Activated CD4-positive, alpha-beta memory T cell treated with anti-CD3 and anti-CD28 coated beads, Interleukin-2, amount 10 ng/mL, durations not matched to agents 7 days and 5 days (primary cell): ENCODE measurements at regions of chr14 and their contacts with region 1.

Region 1: GRCh38 chr14:34875031-34875922 is at the start of gene BAZ1A:
- DNase-seq: peak; percentile 44
- H3K4me3 Mint-ChIP-seq: peak within 1 kb of the TSS; percentile 96
- H3K27ac Mint-ChIP-seq: peak within 1 kb of the TSS; percentile 99
- H3K4me1 Mint-ChIP-seq: peaks cover 37% of the 10 kb centered on the region
- H3K27me3 Mint-ChIP-seq: no peaks in the 10 kb centered on the region
- total RNA-seq, gene BAZ1A: 49.8 to 53.1 TPM

Region 2: DNA sequence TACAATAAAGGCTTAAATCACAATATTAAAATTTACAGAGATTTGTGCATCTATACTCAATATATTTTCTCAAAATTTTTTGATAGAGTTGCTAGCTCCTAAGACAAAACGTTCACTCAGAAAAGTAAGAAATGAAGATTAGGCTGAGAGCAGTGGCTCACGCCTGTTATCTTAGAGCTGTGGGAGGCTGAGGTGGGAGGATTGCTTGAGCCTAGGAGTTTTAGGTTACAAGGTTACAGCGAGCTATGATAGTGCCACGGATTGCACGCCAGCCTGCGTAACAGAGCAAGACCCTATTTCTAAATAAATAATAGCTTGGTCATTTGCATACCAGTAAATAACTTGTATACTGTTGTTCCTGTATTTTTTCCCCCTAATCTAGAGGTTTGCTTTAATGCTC is 125.9 kb before region 1 on chr14:
- CTCF ChIA-PET with region 1: no interaction called
- POLR2A ChIA-PET with region 1: no interaction called
- DNase-seq: no peak
- H3K4me3 Mint-ChIP-seq: no peak overlapping the region
- H3K27ac Mint-ChIP-seq: no peak overlapping the region
- H3K4me1 Mint-ChIP-seq: no peaks in the 10 kb centered on the region
- H3K27me3 Mint-ChIP-seq: no peaks in the 10 kb centered on the region

Region 3: DNA sequence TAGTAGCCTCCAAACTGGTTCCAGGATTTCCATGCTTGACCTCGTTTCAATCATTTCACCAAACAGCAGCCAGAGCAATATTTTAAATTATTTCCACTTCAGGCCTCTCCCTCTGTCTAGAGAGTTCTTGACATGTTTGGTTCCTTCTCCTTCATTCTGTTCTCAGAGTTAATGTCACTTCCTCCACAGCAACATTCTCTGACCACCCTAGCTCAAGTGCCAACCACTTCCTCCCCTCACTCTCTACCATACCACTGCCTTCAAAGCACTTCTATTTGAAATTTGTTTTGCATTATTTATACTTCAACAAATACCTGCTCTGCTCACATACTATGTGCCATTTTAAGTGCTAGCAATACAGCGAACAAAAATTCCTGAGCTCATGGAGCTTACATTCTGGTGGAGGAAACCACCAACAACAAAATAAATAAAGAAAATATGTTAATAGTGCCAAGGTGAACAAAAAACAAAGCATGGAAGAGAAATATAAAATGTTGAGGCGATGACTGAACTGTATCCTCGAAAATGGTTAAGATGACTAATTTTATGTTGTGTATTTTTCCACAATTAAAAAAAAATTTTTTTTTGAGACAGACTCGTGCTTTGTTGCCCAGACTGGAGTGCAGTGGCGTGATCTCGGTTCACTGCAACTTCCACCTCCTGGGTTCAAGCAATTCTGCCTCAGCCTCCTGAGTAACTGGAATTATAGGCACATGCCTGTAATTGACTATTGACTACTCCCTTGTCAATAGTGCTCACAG is 17.4 kb before region 1 on chr14:
- CTCF ChIA-PET with region 1: interaction called, 4 read pairs
- POLR2A ChIA-PET with region 1: interaction called, 16 read pairs
- DNase-seq: peak; percentile 56
- H3K4me3 Mint-ChIP-seq: peak overlapping the region; percentile 1
- H3K27ac Mint-ChIP-seq: peak overlapping the region; percentile 82
- H3K4me1 Mint-ChIP-seq: peaks cover 26% of the 10 kb centered on the region
- H3K27me3 Mint-ChIP-seq: no peaks in the 10 kb centered on the region

Region 4: DNA sequence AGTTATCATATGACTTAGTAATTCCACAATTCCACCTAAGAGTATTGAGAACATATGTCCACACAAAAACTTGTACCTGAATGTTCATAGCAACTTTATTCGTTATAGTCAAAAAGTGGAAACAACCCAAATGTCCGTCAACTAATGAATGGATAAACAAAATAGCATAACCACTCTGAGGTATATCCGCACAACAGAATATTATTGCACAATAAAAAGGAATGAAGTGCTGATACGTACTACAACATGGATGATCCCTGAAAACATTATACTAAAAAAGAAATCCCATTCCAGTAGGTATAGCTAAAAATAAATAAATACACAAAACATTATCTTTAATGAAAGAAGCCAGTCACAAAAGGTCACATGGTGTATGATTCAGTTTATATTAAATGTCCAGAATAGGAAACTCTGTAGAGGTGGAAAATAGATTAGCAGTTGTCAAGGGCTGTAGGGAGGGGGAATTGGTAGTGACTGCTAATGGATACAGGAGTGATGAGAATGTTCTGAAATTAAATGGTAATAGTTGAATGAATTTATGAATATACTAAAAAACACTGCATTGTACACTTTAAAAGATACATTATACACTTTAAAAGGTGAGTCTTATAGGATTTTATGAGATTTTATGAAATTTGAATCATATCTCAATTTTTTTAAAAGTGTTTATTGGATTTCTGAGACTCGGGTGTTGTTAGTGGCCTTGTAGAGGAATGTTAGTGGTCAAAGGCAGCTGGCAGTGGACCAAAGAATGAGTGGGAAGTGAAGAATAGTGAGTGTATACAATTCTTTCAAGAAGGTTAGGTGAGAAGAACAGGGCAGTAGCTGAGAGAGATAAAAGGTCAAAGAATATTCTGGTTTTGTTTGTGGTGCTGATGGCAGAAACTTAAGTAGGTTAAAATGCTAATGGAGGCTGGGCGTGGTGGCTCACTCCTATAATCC is 36.2 kb after region 1 on chr14:
- CTCF ChIA-PET with region 1: no interaction called
- POLR2A ChIA-PET with region 1: no interaction called
- DNase-seq: no peak
- H3K4me3 Mint-ChIP-seq: no peak overlapping the region
- H3K27ac Mint-ChIP-seq: no peak overlapping the region
- H3K4me1 Mint-ChIP-seq: no peaks in the 10 kb centered on the region
- H3K27me3 Mint-ChIP-seq: no peaks in the 10 kb centered on the region

Region 5: DNA sequence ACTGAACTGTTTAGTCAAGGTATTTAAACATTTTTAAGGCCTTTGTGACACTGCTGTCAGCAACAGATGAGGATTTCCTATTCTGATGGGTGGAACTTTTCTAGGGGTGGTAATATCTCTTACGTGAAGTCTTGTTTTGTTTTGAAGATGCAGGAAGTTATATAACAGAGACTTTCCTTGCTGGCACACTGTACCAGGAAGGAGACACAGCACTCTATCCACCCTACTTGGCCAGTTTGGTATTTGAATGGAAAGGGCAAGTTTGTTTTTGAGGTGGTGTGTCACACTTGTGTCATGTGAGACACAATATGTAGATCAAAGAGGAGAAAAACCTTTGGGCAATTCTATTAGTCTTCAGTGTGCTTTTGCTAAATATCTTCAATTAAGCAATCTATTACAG is 55.9 kb after region 1 on chr14:
- CTCF ChIA-PET with region 1: interaction called, 3 read pairs
- POLR2A ChIA-PET with region 1: interaction called, 20 read pairs
- DNase-seq: peak; percentile 27
- H3K4me3 Mint-ChIP-seq: peak overlapping the region; percentile 4
- H3K27ac Mint-ChIP-seq: peak overlapping the region; percentile 91
- H3K4me1 Mint-ChIP-seq: peaks cover 32% of the 10 kb centered on the region
- H3K27me3 Mint-ChIP-seq: no peaks in the 10 kb centered on the region

Region 6: GRCh38 chr14:35079742-35080141 is 204.5 kb after region 1 on chr14:
- CTCF ChIA-PET with region 1: no interaction called
- POLR2A ChIA-PET with region 1: no interaction called
- DNase-seq: no peak
- H3K4me3 Mint-ChIP-seq: no peak overlapping the region
- H3K27ac Mint-ChIP-seq: no peak overlapping the region
- H3K4me1 Mint-ChIP-seq: no peaks in the 10 kb centered on the region
- H3K27me3 Mint-ChIP-seq: no peaks in the 10 kb centered on the region